Heart left ventricle (tissue), 16 donors: ENCODE measurements at regions of chr12 and their contacts with region 1.

Region 1: GRCh38 chr12:13211859-13212664 is 15.5 kb downstream of the EMP1 start:
- DNase-seq: peak in 3 of 5 donors; percentile 38 to 51 (median 43)
- ATAC-seq: peak in 2 of 4 donors; percentile 26 to 28
- H3K4me3 ChIP-seq: no peak overlapping the region
- H3K27ac ChIP-seq: peak overlapping the region in 1 of 12 donors; percentile 13
- H3K4me1 ChIP-seq: peaks cover 3 to 52% (median 45%) of the 10 kb centered on the region in 12 donors
- H3K27me3 ChIP-seq: no peaks in the 10 kb centered on the region
- CTCF ChIP-seq: peak; percentile 61 to 90 (median 76)
- POLR2A ChIP-seq: no peak

Region 2: GRCh38 chr12:12916135-12916944 is 295.7 kb before region 1 on chr12:
- intact Hi-C with region 1: loop called in 8 of 10 experiments (anchors 1 to 5 kb)
- DNase-seq: peak; percentile 75 to 88 (median 84)
- ATAC-seq: peak; percentile 86 to 98 (median 96)
- H3K4me3 ChIP-seq: peak overlapping the region in 4 of 12 donors; percentile 10 to 23 (median 16)
- H3K27ac ChIP-seq: peak overlapping the region in 6 of 12 donors; percentile 5 to 46 (median 34)
- H3K4me1 ChIP-seq: peaks cover 0 to 14% (median 7%) of the 10 kb centered on the region in 12 donors
- H3K27me3 ChIP-seq: no peaks in the 10 kb centered on the region
- CTCF ChIP-seq: peak; percentile 96 to 99 (median 98)
- POLR2A ChIP-seq: no peak

Region 3: GRCh38 chr12:13023811-13024530 is 188.1 kb before region 1 on chr12:
- intact Hi-C with region 1: loop called in 1 of 10 experiments (anchors 5 kb)
- DNase-seq: peak in 1 of 5 donors; percentile 31
- ATAC-seq: peak; percentile 58 to 86 (median 68)
- H3K4me3 ChIP-seq: no peak overlapping the region
- H3K27ac ChIP-seq: no peak overlapping the region
- H3K4me1 ChIP-seq: peaks cover 0 to 14% (median 0%) of the 10 kb centered on the region in 12 donors
- H3K27me3 ChIP-seq: no peaks in the 10 kb centered on the region
- CTCF ChIP-seq: peak in 6 of 12 donors; percentile 19 to 59 (median 40)
- POLR2A ChIP-seq: no peak

Region 4: DNA sequence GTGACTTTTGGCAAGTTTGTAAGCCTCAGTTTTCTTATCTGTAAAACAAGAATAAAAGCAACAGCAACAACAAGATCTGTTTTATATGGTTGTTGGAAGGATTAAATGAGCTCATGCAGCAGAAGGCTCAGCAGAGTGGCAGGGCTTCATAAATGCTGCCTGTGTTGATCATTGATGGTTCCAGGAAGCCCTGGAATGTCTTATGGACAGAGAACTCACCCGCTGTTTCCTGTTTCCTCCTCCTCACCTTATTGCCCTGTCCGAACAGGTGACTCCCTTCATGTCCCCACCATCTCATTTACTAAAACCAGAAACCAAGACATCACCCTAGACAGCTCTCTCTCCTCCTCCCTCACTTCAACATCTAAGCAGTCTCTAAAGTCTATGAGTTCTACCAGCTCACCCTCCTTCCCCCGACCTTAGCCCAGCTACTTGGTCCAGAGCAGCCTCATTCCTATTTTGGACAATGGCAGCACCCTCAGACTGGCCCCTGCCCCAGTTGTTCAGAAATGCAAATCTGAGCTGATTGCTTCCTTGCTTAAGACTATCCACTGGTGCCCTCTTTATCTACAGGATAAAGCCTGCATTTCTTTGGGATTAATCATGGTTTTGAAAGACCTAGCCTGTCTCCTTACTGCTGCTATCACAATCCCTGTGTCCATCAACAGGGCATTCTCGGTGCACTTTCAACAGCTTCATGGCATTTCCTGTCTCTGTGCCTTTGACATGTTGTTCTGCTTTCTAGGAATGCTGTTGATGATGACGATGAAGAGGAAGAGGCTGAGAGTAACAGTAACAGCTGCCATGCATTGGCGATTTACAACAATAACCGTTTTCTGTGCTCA is 87.2 kb before region 1 on chr12:
- intact Hi-C with region 1: no loop called
- DNase-seq: no peak
- ATAC-seq: no peak
- H3K4me3 ChIP-seq: no peak overlapping the region
- H3K27ac ChIP-seq: no peak overlapping the region
- H3K4me1 ChIP-seq: peaks cover 0 to 16% (median 0%) of the 10 kb centered on the region in 12 donors
- H3K27me3 ChIP-seq: no peaks in the 10 kb centered on the region
- CTCF ChIP-seq: no peak
- POLR2A ChIP-seq: no peak

Region 5: DNA sequence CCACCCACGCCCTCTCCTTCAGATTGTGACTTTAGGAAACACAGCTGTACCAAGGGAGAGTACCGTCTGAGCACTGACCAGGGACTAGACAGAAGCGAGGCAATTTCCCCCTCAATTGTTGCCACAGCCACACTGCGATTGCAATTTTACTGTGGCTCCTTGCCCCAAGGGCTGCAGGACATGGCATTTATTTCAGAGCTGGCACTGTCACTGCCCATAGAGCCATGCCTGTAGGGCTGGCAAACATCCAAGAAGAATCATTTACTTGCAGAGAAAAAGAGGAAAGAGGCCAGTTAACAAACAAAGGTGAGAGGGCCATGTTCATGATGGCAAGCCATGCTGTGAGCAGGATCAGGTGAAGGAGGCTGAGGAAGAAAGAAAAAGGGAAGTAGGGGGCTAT is 114.0 kb after region 1 on chr12:
- intact Hi-C with region 1: no loop called
- DNase-seq: no peak
- ATAC-seq: no peak
- H3K4me3 ChIP-seq: no peak overlapping the region
- H3K27ac ChIP-seq: no peak overlapping the region
- H3K4me1 ChIP-seq: no peaks in the 10 kb centered on the region
- H3K27me3 ChIP-seq: peaks cover 0 to 15% (median 0%) of the 10 kb centered on the region in 9 donors
- CTCF ChIP-seq: no peak
- POLR2A ChIP-seq: no peak

Region 6: GRCh38 chr12:13627536-13627935 is 415.5 kb after region 1 on chr12:
- intact Hi-C with region 1: no loop called
- DNase-seq: no peak
- ATAC-seq: no peak
- H3K4me3 ChIP-seq: no peak overlapping the region
- H3K27ac ChIP-seq: no peak overlapping the region
- H3K4me1 ChIP-seq: no peaks in the 10 kb centered on the region
- H3K27me3 ChIP-seq: no peaks in the 10 kb centered on the region
- CTCF ChIP-seq: no peak
- POLR2A ChIP-seq: no peak